ENCODE measurements at regions of chr16 and their contacts with region 1.

Region 1: DNA sequence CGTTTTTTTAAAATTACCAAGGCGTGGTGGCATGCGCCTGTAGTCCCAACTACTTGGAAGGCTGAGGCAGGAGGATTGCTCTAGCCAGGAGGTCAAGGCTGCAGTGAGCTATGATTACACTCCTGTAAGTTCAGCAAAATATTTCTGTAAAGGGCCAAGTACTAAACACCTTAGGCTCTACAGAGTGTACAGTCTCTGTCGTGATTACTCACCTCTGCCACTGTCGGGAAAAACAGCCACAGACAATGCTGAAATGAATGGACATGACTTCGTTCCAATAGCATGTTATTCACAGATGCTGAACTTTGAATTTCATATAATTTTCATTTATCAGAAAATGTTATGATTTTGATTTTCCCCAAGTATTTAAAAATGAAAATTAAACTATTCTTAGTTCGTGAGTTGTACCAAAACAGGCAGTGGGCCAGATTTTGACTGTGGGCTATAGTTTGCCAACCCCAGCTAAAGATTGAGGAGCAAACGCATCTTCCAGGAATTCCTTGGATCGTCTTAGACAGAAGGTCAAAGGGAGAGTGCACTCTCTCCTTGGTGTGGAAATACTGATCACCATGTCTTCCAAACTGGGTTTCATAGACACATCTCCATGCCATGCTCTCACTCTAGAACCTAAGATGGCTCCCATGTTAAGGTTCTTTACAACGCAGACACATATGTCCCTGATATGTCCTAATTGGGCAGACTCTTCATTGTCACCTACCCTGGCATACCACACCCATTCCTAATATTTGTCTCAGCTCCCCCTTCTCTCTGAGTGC is 89.5 kb downstream of the MARF1 start:
- DNase-seq: no peak
- H3K4me3 ChIP-seq: no peak overlapping the region
- H3K27ac ChIP-seq: no peak overlapping the region
- H3K4me1 ChIP-seq: no peaks in the 10 kb centered on the region
- H3K27me3 ChIP-seq: no peaks in the 10 kb centered on the region
- CTCF ChIP-seq: no peak
- POLR2A ChIP-seq: no peak

Region 2: DNA sequence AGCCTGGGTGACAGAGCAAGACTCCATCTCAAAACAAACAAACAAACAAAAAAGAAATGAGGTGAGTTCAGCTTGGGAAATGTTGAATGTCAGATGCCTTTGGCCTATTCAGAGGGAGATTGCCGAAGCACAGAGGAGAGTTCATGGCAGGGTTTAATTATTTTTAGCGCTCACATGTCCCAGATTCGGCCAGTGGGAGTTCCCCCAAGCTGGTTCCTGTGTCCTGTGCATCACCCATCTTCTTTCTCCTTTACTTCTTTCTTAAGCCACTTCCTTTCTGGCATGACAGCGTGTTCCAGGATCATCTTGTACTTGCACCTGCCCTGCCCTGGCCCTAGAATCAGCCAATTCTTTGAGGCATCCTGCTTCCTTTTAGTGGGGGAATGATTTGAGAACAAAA is 148.7 kb before region 1 on chr16:
- intact Hi-C with region 1: no loop called
- DNase-seq: peak; percentile 16
- H3K4me3 ChIP-seq: no peak overlapping the region
- H3K27ac ChIP-seq: peak overlapping the region; percentile 47 to 63
- H3K4me1 ChIP-seq: no peaks in the 10 kb centered on the region
- H3K27me3 ChIP-seq: no peaks in the 10 kb centered on the region
- CTCF ChIP-seq: no peak
- POLR2A ChIP-seq: no peak

Region 3: GRCh38 chr16:15427648-15428239 is 125.8 kb before region 1 on chr16:
- intact Hi-C with region 1: loop called (anchors 5 kb)
- DNase-seq: peak; percentile 46
- H3K4me3 ChIP-seq: no peak overlapping the region
- H3K27ac ChIP-seq: no peak overlapping the region
- H3K4me1 ChIP-seq: no peaks in the 10 kb centered on the region
- H3K27me3 ChIP-seq: no peaks in the 10 kb centered on the region
- CTCF ChIP-seq: peak; percentile 63 to 78 (median 70)
- POLR2A ChIP-seq: no peak

Region 4: DNA sequence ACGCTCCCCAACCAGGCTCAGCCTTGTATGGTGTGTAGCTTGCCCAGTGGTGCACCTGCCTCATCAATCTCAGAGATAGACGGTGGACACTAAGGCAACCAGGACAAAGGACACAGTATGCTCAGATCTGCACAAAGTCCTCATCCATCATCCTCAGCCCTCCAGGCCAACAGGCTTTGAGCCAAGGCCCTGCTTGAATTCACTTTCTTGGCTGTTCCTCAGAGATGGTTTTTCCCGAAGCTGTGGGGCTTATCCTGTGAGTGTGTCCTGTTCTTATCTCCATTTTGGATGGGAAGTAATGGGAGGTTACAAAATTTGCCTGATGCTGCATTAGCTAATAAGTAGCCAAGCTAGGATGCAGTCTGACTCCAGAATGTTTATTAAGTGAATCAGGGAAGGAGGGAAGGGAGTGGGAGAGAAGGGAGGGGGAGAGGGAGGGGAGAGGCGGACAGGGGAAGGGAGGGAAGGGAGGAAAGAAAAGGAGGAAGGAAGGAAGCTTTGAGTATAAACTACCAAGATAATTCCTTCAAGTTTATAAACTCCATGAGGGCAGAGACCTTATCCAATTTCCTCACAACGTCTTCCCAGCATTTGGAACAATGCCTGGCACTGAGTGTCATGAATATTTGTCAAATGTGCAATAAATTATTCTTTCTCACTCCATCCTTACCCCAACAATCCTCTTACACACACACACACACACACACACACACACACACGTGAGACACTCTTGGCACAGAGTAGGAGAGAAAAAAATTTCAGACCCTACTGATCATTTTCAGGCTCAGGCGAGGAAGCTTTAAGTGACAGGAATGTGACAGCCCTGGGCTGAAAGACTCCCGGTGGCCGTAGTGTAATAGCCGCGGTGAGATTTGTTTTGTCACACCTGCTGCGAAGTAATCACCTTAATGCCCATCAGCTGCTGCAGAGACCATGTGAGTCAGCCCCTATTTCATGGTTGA is 34.8 kb before region 1 on chr16:
- intact Hi-C with region 1: loop called (anchors 5 kb)
- DNase-seq: no peak
- H3K4me3 ChIP-seq: no peak overlapping the region
- H3K27ac ChIP-seq: peak overlapping the region in 1 of 2 donors; percentile 27
- H3K4me1 ChIP-seq: no peaks in the 10 kb centered on the region
- H3K27me3 ChIP-seq: no peaks in the 10 kb centered on the region
- CTCF ChIP-seq: no peak
- POLR2A ChIP-seq: no peak

Region 5: GRCh38 chr16:15604460-15605440 is 51.2 kb after region 1 on chr16:
- intact Hi-C with region 1: loop called (anchors 5 kb)
- DNase-seq: no peak
- H3K4me3 ChIP-seq: no peak overlapping the region
- H3K27ac ChIP-seq: no peak overlapping the region
- H3K4me1 ChIP-seq: no peaks in the 10 kb centered on the region
- H3K27me3 ChIP-seq: no peaks in the 10 kb centered on the region
- CTCF ChIP-seq: no peak
- POLR2A ChIP-seq: no peak

Region 6: GRCh38 chr16:15672514-15673167 is 119.1 kb after region 1 on chr16:
- intact Hi-C with region 1: no loop called
- DNase-seq: peak; percentile 95
- H3K4me3 ChIP-seq: no peak overlapping the region
- H3K27ac ChIP-seq: peak overlapping the region; percentile 86 to 91
- H3K4me1 ChIP-seq: peaks cover 5% of the 10 kb centered on the region
- H3K27me3 ChIP-seq: no peaks in the 10 kb centered on the region
- CTCF ChIP-seq: no peak
- POLR2A ChIP-seq: peak; percentile 42